Right ventricle myocardium superior (tissue), 1 donor: ENCODE measurements at regions of chr4 and their contacts with region 1.

Region 1: DNA sequence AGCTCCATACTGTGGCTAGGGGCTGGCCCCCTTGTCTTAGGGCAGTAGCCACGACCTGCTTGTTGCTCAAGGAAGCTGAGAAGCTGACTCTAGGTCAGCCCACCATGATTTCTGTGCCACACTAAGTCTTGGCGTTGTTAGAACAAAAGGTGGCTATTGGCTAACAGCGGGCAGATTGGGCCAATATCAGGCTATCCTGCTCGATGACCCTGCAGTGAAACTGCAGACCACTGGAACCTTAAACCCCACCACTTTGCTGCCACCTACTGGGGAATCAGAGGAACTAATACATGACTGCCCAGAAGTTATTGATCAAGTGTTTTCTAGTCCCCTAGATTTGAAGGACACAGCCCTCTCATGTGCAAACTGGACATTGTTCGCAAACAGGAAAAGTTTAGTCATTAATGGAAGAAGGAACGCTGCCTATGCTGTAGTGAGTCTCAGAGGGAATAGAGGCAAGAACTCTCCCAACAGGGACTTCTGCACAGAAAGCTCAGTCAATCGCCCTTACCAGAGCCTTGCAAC is 17.0 kb upstream of the PAPSS1 start:
- DNase-seq: no peak
- ATAC-seq: peak; percentile 77

Region 2: DNA sequence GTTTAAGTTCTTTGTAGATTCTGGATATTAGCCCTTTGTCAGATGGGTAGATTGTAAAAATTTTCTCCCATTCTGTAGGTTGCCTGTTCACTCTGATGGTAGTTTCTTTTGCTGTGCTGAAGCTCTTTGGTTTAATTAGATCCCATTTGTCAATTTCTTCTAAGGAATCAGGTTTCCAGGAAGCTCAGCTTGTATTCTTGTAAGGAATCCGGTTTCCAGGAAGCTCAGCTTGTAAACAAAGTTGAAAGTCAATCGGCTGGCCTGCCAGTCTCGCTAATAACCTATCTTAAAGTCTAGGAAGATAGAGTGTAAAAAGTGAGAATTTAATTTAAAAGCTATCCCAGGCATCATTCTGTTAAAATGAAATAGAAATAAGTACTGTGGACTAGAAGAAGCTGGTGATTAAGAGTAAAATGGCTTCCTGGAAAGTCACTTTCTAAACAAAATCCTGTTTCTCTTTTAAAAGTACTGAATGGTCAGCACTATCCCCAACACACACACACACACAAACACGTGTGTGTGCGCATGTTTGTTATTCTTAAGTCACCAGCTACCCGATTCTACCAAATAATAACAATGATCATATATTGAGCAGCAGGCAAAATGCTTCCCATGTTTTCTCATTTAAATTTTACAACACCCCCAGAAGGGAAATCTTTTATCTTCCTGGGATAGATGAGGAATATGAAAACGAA is 188.6 kb before region 1 on chr4:
- intact Hi-C with region 1: no loop called
- DNase-seq: no peak
- ATAC-seq: no peak

Region 3: GRCh38 chr4:107654694-107655093 is 82.3 kb before region 1 on chr4:
- intact Hi-C with region 1: loop called (anchors 10 kb)
- DNase-seq: no peak
- ATAC-seq: peak; percentile 41